ENCODE measurements at regions of chr1 and their contacts with region 1.

Region 1: DNA sequence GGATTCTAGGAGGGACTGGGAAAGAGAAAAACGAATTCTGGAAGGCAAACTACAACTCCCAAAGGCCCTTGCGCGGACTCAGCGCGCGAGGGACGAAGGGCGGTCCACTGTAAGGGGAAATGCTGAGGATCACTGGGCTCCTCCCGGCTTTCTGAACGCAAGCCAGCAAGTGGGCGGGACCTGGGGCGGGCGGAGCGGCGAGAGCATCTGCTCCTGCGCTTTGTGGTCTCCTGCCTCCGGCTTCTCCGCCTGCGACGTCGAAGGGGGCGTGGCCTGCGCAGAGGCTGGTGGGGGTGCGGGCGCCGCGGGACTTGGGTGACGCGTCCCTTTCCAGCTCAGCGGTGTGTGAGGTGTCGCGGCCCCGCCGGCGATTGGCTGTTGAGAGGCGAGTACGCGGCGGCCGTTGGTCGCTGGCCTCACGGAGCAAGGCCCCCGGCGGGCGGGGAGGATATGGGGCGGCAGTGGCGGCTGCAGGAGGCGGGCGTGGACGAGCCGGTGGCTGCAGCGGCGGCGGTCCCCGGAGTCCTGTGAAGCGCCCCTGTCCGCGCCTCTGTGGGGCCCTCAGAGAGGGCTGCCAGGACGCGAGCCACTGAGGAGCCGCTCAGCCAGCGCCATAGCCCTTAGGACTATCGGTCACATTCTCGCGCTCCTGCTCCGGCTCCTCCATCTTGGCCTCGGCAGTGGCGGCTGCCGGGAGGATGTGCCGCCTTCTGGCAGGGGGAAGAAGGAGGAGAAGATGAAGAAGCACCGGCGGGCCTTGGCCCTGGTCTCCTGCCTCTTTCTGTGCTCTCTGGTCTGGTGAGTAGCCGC is at the start of gene SUCO:
- DNase-seq: peak; percentile 99 to 100 (median 100)
- ATAC-seq: peak; percentile 80
- H3K4me3 ChIP-seq: peak within 1 kb of the TSS; percentile 74 to 80
- H3K4me3 Mint-ChIP-seq: peak within 1 kb of the TSS; percentile 99
- H3K27ac ChIP-seq: peak within 1 kb of the TSS; percentile 93 to 94
- H3K27ac Mint-ChIP-seq: peak within 1 kb of the TSS; percentile 100
- H3K4me1 ChIP-seq: peaks cover 34% of the 10 kb centered on the region
- H3K4me1 Mint-ChIP-seq: peaks cover 47% of the 10 kb centered on the region
- H3K27me3 ChIP-seq: no peaks in the 10 kb centered on the region
- H3K27me3 Mint-ChIP-seq: no peaks in the 10 kb centered on the region
- CTCF ChIP-seq: peak; percentile 16
- total RNA-seq, gene SUCO: 106 to 107 TPM

Region 2: DNA sequence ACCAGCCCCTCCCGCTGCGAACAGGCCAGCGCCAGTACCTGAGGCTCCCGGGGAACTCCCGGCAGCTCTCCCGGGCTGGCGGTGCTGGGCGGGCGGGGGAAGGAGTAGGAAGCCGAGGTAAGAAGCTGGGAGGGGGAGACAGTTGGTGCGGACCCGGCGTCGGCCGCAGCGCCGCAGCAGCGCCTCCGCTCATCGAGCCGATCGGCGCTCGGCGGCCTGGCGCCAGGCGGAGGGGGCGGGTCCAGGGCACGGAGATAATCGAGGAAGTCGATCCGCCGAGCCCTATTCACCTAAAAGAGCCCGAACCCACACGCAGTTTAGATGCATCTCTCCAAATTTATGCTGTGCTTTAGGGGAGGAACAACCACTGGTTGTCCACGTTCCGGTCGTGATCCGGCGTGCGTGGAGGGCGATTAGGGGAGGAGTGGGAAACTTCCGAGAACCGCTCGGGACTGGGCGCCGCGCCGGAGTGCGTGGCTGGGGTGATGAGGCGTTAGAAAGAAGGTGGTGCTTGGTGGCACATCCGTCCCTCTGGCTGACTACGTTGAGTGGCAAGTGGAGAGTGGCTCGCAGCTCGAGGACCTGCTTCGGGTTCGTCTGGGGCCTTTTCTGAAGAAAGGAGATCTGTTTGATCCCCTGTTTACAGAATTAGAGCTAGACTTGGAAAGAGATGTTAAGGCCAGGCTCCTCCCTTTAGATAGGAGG is 790.9 kb before region 1 on chr1 and contains the start of gene VAMP4:
- CTCF ChIA-PET with region 1: no interaction called
- POLR2A ChIA-PET with region 1: no interaction called
- intact Hi-C with region 1: loop called in 1 of 2 experiments (anchors 5 kb)
- DNase-seq: peak; percentile 72 to 93 (median 85)
- ATAC-seq: peak; percentile 87
- H3K4me3 ChIP-seq: peak within 1 kb of the TSS; percentile 94 to 99
- H3K4me3 Mint-ChIP-seq: peak within 1 kb of the TSS; percentile 100
- H3K27ac ChIP-seq: peak within 1 kb of the TSS; percentile 96 to 99
- H3K27ac Mint-ChIP-seq: peak within 1 kb of the TSS; percentile 100
- H3K4me1 ChIP-seq: peaks cover 39% of the 10 kb centered on the region
- H3K4me1 Mint-ChIP-seq: peaks cover 51% of the 10 kb centered on the region
- H3K27me3 ChIP-seq: no peaks in the 10 kb centered on the region
- H3K27me3 Mint-ChIP-seq: no peaks in the 10 kb centered on the region
- CTCF ChIP-seq: no peak
- total RNA-seq, gene VAMP4: 8.4 to 8.6 TPM

Region 3: DNA sequence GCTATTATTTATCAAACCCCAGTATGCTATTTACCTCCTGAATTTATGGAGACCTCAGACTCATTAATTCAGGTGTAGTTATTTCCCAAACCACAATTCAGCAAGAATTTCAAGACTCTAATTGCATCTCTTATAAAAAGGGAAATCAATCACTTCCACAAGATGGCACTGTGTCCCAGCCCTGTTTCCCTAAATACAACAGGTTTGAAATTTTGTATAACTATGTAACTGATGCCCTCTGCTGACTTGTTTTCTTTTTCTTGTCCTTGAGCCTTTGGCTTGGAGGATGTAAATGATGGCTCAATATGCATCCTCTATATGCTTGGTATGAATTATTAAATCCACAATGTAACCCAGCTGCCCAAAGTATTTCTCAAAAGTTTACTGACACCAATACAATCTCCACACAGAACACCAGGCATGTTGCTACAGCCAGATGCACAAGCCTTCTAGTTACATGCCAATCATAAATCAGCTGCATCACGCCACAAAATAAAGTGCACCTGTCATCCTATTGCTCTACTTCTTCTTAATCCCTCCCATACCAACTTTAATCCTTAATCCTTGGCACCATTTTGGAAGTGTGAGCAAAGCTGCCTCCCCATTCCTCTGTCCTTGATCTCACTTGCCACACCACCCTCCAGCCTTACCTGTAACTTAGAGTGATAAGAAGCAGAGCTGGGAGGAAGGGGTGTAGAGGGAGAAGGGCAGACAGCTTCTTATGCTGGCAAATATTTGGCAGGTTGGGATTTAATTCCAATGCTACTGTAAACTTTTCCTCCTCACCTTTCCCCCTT is 103.4 kb before region 1 on chr1:
- CTCF ChIA-PET with region 1: interaction called, 6 read pairs
- POLR2A ChIA-PET with region 1: no interaction called
- intact Hi-C with region 1: loop called in 1 of 2 experiments (anchors 5 kb)
- DNase-seq: peak in 6 of 9 experiments; percentile 22 to 80 (median 47)
- ATAC-seq: peak; percentile 75
- H3K4me3 ChIP-seq: no peak overlapping the region
- H3K4me3 Mint-ChIP-seq: no peak overlapping the region
- H3K27ac ChIP-seq: no peak overlapping the region
- H3K27ac Mint-ChIP-seq: peak overlapping the region; percentile 7
- H3K4me1 ChIP-seq: peaks cover 51% of the 10 kb centered on the region
- H3K4me1 Mint-ChIP-seq: peaks cover 49% of the 10 kb centered on the region
- H3K27me3 ChIP-seq: no peaks in the 10 kb centered on the region
- H3K27me3 Mint-ChIP-seq: no peaks in the 10 kb centered on the region
- CTCF ChIP-seq: peak; percentile 82

Region 4: DNA sequence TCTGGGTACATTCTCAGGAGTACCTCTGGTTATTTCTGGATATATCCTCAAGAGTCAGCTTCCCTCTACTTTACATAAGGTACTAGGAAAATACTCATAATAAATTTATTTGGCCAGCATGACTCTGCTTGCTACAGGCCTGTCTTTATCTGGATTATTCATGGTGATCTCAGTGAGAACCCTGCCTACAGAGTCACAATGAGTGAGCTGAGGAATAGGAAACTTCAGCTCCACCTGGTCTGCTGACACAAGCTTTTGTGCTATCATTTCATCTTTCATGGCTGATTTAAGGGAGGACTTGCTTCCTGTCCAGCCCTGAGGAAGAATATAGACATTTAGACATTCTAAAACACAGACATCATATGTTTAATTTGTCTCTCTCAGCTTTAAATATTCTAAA is 19.4 kb before region 1 on chr1:
- CTCF ChIA-PET with region 1: no interaction called
- POLR2A ChIA-PET with region 1: no interaction called
- intact Hi-C with region 1: no loop called
- DNase-seq: no peak
- ATAC-seq: no peak
- H3K4me3 ChIP-seq: no peak overlapping the region
- H3K4me3 Mint-ChIP-seq: no peak overlapping the region
- H3K27ac ChIP-seq: no peak overlapping the region
- H3K27ac Mint-ChIP-seq: no peak overlapping the region
- H3K4me1 ChIP-seq: no peaks in the 10 kb centered on the region
- H3K4me1 Mint-ChIP-seq: no peaks in the 10 kb centered on the region
- H3K27me3 ChIP-seq: no peaks in the 10 kb centered on the region
- H3K27me3 Mint-ChIP-seq: no peaks in the 10 kb centered on the region
- CTCF ChIP-seq: no peak

Region 5: DNA sequence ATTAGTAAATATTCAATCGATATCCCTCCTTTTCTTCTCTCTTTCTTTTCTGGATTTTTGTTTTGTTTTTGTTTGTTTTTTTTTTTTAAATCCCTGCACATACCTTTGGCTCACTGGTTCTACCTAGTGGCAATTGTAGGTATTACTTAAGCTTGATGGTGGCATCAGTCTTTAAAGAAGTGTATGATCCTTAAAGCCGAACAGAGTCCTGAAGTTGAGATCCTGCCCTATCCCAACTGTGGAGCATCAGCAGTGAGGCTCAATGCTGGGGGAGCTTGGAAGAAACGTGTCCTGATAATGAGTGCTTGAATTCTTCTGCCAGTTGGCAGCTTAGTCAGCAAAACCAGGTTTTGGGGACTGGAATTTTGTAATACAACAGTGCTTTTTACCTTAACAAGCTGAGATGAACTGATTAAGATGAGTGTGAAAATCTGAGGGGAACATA is 186.8 kb after region 1 on chr1:
- CTCF ChIA-PET with region 1: interaction called, 3 read pairs
- POLR2A ChIA-PET with region 1: interaction called, 3 read pairs
- intact Hi-C with region 1: loop called in 1 of 2 experiments (anchors 5 kb)
- DNase-seq: peak in 2 of 9 experiments; percentile 73 to 77
- ATAC-seq: peak; percentile 93
- H3K4me3 ChIP-seq: no peak overlapping the region
- H3K4me3 Mint-ChIP-seq: no peak overlapping the region
- H3K27ac ChIP-seq: no peak overlapping the region
- H3K27ac Mint-ChIP-seq: no peak overlapping the region
- H3K4me1 ChIP-seq: no peaks in the 10 kb centered on the region
- H3K4me1 Mint-ChIP-seq: peaks cover 22% of the 10 kb centered on the region
- H3K27me3 ChIP-seq: no peaks in the 10 kb centered on the region
- H3K27me3 Mint-ChIP-seq: peaks cover 3% of the 10 kb centered on the region
- CTCF ChIP-seq: peak; percentile 94

Region 6: DNA sequence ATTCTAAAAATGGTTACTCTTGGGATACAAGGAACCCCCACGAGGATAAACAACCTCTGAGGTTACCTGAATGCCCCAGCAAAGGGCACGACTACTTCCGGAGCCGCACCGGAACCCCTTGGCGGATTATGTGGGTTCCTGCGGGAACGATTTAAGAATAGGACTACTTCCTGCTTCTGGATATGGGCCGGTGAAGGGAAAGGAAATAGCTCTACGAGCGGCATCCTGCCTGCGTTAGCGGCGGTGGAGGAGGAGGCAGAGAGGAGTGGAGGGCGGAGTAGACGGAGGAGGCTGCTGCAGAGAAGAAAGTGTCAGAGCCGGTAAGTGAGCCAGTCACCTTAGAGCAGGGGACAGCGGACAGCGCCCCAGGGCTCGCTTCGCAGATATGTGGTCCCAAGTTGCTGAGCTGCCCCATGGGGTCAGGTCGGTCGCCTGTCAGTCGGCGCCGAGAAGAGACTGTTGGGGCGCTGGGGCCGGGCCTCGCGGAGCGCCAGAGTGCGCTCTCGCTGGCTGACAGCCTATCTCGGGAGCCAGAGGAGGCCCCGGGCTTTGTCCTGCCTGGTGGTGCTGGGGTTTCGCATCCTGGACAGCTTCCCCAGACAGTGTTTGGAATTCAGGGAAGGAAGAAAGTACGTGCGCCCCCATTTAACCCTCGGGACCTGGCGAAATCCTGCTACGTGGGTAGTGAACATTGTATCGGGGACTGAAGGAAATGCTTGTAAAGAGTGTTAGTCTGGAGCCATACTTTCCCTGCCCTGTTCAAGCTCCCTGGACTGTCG is 1182.0 kb after region 1 on chr1 and contains the start of gene KLHL20:
- CTCF ChIA-PET with region 1: no interaction called
- POLR2A ChIA-PET with region 1: interaction called, 3 read pairs
- intact Hi-C with region 1: loop called (anchors 2 to 5 kb)
- DNase-seq: peak; percentile 72 to 94 (median 83)
- ATAC-seq: peak; percentile 98
- H3K4me3 ChIP-seq: peak within 1 kb of the TSS; percentile 80 to 86
- H3K4me3 Mint-ChIP-seq: peak within 1 kb of the TSS; percentile 96
- H3K27ac ChIP-seq: peak within 1 kb of the TSS; percentile 76 to 87
- H3K27ac Mint-ChIP-seq: peak within 1 kb of the TSS; percentile 97
- H3K4me1 ChIP-seq: peaks cover 24% of the 10 kb centered on the region
- H3K4me1 Mint-ChIP-seq: peaks cover 38% of the 10 kb centered on the region
- H3K27me3 ChIP-seq: peaks cover 0 to 2% of the 10 kb centered on the region in 2 experiments
- H3K27me3 Mint-ChIP-seq: peaks cover 7% of the 10 kb centered on the region
- CTCF ChIP-seq: no peak
- total RNA-seq, gene KLHL20: 27.9 to 29.0 TPM

Region 7: GRCh38 chr1:174022080-174022975 is 1489.4 kb after region 1 on chr1 and contains the start of gene RC3H1:
- CTCF ChIA-PET with region 1: no interaction called
- POLR2A ChIA-PET with region 1: no interaction called
- intact Hi-C with region 1: loop called (anchors 1 to 5 kb)
- DNase-seq: peak; percentile 79 to 93 (median 89)
- ATAC-seq: peak; percentile 95
- H3K4me3 ChIP-seq: peak within 1 kb of the TSS; percentile 83 to 94
- H3K4me3 Mint-ChIP-seq: peak within 1 kb of the TSS; percentile 95
- H3K27ac ChIP-seq: peak within 1 kb of the TSS; percentile 84 to 93
- H3K27ac Mint-ChIP-seq: peak within 1 kb of the TSS; percentile 98
- H3K4me1 ChIP-seq: peaks cover 30% of the 10 kb centered on the region
- H3K4me1 Mint-ChIP-seq: peaks cover 45% of the 10 kb centered on the region
- H3K27me3 ChIP-seq: no peaks in the 10 kb centered on the region
- H3K27me3 Mint-ChIP-seq: no peaks in the 10 kb centered on the region
- CTCF ChIP-seq: no peak
- total RNA-seq, gene RC3H1: 40.2 to 41.4 TPM

Measured in CD8-positive, alpha-beta T cell (primary cell).